ENCODE measurements at regions of chr22 and their contacts with region 1.

Region 1: DNA sequence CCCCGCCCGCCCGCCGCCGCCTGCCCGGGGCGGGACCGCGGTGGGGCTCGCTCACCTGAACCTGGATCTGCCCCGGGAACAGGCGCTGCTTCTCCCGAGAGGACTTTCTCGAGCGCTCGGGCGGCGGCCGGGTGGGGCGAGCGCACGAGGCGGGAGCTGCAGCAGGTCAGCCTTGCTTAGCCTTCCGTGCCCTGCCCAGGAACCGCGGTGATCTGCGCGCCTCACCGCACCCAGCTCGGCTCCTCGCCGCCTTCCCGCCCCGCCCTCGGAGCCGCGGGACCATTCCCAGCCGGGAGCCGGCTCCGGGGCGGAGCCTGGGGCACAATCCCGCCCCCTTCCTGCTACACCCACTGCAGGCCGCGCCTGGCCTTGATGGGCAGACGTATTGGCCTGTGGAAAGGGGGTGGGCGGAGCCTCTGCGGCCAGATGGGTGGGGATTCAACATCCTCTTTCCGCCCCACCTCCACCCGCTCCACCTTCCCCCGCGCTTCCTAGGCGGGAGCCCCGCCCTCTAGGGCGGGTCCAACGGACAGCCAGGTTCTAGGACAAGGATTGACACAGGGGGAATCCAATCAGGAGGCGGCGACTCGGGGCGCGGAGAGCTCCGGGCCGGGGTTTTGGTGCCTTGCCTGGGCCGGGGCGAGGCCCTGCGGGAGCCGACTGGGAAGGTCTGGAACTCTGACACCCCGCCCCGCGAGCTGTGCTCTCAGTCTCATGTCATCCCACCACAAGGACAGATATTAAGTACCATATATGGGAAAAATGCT is at the start of gene MYH9:
- DNase-seq: peak; percentile 100
- ATAC-seq: peak; percentile 86
- H3K4me3 ChIP-seq: peak within 1 kb of the TSS; percentile 97
- H3K4me1 ChIP-seq: peaks cover 27% of the 10 kb centered on the region
- CTCF ChIP-seq: no peak
- total RNA-seq, gene MYH9: 501 to 831 (median 599) TPM

Region 2: DNA sequence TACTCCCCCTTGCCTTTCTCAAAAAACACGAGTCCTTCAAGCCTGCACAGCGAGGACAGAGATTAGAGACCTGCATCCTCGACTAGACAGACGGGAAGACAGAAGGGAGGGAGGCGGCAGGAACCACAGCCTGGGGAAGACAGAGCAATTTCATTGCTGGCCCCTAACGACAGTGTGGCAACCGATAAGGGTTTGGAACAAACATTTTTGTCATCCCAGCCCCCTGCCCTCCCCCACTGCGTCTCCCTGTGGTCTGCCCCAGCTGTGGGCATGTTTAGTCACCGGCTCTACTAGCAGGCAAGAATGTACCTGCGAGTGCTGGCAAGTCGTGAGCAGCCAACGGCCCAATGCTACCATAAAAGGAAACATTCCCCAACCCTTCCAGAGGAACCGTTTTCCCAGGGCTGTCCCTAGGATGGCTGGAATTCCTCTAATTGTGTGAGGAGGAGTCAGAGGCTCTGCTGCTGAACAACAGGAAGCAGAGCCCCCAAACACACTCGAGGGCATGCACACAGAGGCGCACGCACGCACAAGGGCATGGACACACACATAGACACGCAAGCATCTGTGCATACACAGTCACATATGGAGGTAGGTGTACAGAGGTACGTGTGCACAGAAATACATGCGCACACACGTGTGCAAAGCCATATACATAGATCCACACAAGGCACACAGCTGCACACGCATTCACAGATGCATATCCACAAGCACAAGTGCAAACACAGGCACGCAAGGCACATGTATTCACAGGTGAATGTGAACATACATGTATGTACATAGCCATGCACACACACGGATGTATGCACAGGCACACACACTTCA is 58.5 kb before region 1 on chr22:
- intact Hi-C with region 1: loop called (anchors 2 to 10 kb)
- DNase-seq: peak in 2 of 3 donors; percentile 65 to 78
- ATAC-seq: peak; percentile 27
- H3K4me3 ChIP-seq: no peak overlapping the region
- H3K4me1 ChIP-seq: peaks cover 83% of the 10 kb centered on the region
- CTCF ChIP-seq: no peak

Region 3: DNA sequence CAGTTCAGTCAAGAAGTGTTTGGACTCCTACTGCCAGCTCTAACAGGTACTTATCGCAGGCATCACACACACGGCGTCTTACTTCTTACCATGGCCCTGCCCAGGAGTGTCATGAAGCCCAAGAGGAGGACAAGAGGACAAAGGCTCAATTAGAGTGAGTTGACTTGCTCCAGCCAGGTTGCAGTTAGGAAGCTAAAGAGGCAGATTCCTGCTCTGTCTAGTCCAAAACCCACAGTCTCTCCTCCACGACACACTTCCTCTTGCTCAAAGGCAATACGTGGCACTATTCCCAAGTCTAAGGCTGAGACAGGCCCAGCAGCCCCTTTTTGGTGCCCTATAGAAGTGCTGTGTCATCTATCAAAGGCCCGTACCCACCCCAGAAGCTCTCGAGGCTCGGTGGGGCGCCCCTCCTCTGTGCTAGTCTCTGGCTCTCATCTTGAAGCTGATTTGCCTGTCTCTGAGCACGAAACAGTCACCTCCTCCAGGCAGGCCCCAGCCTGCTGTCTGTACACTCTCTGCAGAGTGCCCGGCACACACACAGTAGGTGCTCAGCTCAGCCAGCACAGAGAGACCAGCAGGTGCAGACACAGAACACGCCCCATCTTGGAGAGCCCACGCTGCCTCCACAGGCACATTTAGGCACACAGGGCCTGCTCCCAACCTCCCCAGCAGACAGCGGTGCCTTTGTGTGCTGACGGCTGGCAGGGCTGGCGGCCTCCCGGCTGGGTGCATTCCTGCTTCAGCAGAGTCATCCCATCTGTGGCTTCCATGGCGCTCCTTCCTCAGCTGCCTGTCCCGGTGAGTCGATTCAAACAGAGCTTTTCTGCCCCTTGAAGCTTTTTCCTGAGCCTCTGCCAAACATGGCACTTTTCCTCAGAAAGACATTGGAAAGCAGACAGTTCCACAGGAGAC is 53.0 kb before region 1 on chr22:
- intact Hi-C with region 1: loop called in 1 of 2 experiments (anchors 2 kb)
- DNase-seq: no peak
- ATAC-seq: no peak
- H3K4me3 ChIP-seq: no peak overlapping the region
- H3K4me1 ChIP-seq: peaks cover 66% of the 10 kb centered on the region
- CTCF ChIP-seq: no peak

Region 4: DNA sequence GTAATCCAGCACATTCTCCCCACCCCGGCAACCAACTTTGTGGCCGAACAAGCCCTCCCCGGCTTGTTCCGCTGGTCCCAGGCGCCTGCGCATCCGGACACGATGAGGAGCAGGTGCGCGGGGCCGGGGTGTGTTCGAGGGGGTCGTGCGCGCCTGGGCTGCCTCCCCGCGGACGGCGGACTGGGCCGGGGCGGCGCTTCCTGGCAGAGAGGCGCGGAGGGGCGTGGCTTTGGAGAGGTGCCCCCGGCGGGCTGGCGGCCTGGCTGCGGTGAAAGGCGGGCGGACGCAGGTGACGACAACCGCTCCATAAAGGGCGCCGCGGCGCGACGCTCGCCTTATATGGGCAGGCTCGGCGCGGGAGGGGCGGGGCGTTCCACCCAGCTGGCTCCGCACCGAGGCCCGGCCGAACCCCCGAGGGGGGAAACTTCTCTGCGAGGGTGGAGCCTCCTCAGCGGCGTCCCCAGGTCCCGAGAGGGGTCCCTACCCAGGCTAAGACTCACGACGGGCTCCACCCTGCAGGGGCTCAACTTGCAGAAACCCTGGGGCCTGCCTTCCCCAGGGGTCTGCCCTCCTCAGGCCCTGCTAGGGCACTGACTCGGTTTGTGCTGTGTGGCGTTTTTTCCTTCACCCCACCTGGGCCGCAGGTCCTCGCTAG is 67.1 kb after region 1 on chr22:
- intact Hi-C with region 1: loop called in 1 of 2 experiments (anchors 10 kb)
- DNase-seq: peak; percentile 98 to 99 (median 99)
- ATAC-seq: peak; percentile 80
- H3K4me3 ChIP-seq: peak overlapping the region; percentile 18
- H3K4me1 ChIP-seq: peaks cover 57% of the 10 kb centered on the region
- CTCF ChIP-seq: peak; percentile 20

Region 5: GRCh38 chr22:36470162-36470993 is 82.4 kb after region 1 on chr22:
- intact Hi-C with region 1: loop called in 1 of 2 experiments (anchors 10 kb)
- DNase-seq: peak; percentile 82 to 86 (median 84)
- ATAC-seq: peak; percentile 89
- H3K4me3 ChIP-seq: no peak overlapping the region
- H3K4me1 ChIP-seq: peaks cover 16% of the 10 kb centered on the region
- CTCF ChIP-seq: peak; percentile 92

Region 6: DNA sequence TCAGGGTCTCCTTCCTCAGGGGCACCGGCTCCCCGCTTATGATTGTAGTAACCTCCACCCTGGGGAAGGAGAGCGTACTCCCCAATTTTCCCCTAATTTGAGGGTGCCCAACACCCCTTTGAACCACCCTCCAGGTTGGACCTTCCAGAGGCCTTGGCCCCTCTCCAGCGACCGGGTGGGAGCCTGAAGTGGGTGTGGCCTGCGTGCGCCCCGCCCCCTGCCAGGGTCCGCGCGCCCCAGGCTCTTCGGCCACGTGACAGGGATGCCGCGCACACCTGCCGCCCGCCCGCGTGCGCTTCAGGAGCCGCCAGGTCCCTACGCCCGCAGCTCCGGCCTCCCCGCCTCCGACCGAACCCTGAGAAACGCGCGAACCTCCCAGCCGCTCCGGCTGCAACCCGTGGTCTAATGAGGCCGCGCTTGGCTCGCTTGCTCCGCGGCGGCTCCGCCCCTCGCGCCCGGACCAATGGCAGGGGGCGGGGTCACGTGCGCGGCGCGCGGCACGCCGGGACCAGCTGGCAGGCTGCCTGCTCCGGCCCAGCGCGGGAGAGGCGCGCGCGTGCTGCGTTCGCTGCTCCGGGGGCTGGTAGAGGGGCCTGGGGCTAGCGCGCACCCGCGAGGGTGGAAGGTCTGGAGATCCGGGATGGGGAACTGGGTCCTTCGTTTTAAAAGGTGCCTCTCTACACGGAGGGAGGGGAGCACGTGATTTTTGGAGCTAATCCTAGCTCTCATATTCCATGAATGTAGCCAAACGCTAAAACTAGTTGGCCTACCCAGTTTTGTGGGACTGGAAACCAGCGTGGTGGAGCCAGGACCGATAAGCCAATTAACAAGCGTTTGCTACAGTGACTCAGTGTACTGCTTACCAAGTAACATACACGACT is 118.9 kb after region 1 on chr22 and contains the start of gene FOXRED2:
- intact Hi-C with region 1: no loop called
- DNase-seq: peak; percentile 92 to 94 (median 92)
- ATAC-seq: peak; percentile 96
- H3K4me3 ChIP-seq: peak within 1 kb of the TSS; percentile 3
- H3K4me1 ChIP-seq: peaks cover 9% of the 10 kb centered on the region
- CTCF ChIP-seq: no peak
- total RNA-seq, gene FOXRED2: 2.8 to 8.6 (median 6.4) TPM

Region 7: DNA sequence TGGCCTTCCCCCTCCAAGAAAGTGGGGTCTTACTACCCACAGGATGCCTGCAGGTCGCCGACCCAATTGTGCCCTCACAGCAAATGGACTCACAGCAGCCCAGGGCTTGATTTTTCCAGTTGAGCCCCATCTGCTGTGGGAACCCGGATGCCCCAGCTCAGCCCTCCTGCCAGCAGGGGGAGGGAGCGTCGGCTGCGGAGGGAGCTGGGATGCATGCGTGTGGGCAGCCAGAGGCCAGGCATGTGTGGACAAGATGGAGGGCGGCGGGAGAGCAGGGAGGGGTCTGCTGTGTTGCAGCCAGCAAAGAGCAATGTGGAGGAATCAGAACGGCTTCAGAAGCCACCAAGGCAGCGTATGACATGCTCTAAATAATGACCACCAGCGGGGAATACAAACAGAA is 182.1 kb after region 1 on chr22:
- intact Hi-C with region 1: no loop called
- DNase-seq: no peak
- ATAC-seq: no peak
- H3K4me3 ChIP-seq: no peak overlapping the region
- H3K4me1 ChIP-seq: no peaks in the 10 kb centered on the region
- CTCF ChIP-seq: no peak

Measured in mucosa of descending colon (tissue), 3 donors.